ENCODE measurements at regions of chr4 and their contacts with region 1.

Region 1: DNA sequence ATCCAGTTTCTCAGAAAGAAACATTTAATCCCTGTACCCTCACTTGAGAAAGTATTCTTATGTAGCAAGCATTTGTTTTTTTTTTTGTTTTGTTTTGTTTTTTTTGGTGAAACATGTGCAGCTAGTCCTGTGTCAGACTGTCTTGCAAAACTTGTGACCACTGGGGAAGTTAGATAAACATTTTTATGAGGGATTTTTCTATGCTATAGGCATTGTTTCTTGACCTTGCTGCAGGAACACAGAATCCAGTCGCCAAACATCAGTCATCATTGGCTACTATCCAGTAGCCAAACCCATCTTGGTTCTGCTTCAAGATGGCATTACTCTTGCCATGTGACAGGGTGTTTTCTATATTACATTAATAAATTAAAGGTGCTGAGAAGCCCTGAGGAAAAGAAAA is 7.7 kb upstream of the MAPK10 start:
- DNase-seq: peak; percentile 69
- ATAC-seq: peak; percentile 73
- H3K4me3 ChIP-seq: no peak overlapping the region
- H3K27ac ChIP-seq: no peak overlapping the region
- H3K4me1 ChIP-seq: peaks cover 10% of the 10 kb centered on the region
- H3K27me3 ChIP-seq: no peaks in the 10 kb centered on the region
- CTCF ChIP-seq: no peak

Region 2: DNA sequence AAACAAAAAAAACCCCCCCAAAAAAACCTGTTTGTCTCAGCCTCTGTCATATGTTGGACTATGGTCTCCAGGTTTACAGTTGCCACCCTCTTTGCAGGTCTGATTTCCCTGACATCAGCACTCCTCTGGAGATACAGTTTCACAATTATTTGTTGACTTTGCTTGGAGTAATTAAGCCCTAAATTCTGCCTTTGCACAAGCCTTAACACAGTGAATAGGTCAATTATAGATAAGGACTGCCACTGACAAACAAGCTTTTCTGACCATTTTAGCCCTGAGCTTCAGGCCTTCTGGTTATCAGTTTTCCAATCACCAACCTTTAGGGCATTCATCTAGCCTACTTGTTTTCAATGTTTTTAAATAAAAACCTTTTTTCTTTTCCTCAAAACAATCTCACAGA is 12.7 kb after region 1 on chr4:
- CTCF ChIA-PET with region 1: no interaction called
- POLR2A ChIA-PET with region 1: interaction called, 11 read pairs
- intact Hi-C with region 1: no loop called
- DNase-seq: no peak
- ATAC-seq: no peak
- H3K4me3 ChIP-seq: no peak overlapping the region
- H3K27ac ChIP-seq: no peak overlapping the region
- H3K4me1 ChIP-seq: no peaks in the 10 kb centered on the region
- H3K27me3 ChIP-seq: no peaks in the 10 kb centered on the region
- CTCF ChIP-seq: no peak

Region 3: DNA sequence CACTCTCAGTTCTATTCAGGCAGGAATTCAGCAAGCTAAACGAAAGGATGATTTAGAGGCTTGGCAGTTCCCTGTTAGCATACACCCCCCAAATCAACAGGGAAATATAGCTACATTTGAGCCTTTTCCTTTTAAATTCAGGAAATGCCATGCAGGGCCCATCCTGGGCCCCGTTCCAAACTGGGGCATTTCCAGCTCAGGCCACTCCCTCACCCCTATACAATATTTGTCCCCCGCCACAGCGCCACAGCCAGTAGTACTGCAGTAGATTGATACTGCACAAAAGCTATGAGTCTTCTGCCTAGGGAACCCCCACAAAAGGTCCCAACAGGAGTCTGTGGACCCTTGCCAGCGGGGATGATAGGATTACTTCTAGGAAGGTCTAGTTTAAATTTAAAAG is 94.3 kb after region 1 on chr4:
- CTCF ChIA-PET with region 1: no interaction called
- POLR2A ChIA-PET with region 1: no interaction called
- intact Hi-C with region 1: no loop called
- DNase-seq: no peak
- ATAC-seq: no peak
- H3K4me3 ChIP-seq: no peak overlapping the region
- H3K27ac ChIP-seq: no peak overlapping the region
- H3K4me1 ChIP-seq: no peaks in the 10 kb centered on the region
- H3K27me3 ChIP-seq: no peaks in the 10 kb centered on the region
- CTCF ChIP-seq: no peak